CD8-positive, alpha-beta memory T cell (primary cell): ENCODE measurements at regions of chr12 and their contacts with region 1.

Region 1: DNA sequence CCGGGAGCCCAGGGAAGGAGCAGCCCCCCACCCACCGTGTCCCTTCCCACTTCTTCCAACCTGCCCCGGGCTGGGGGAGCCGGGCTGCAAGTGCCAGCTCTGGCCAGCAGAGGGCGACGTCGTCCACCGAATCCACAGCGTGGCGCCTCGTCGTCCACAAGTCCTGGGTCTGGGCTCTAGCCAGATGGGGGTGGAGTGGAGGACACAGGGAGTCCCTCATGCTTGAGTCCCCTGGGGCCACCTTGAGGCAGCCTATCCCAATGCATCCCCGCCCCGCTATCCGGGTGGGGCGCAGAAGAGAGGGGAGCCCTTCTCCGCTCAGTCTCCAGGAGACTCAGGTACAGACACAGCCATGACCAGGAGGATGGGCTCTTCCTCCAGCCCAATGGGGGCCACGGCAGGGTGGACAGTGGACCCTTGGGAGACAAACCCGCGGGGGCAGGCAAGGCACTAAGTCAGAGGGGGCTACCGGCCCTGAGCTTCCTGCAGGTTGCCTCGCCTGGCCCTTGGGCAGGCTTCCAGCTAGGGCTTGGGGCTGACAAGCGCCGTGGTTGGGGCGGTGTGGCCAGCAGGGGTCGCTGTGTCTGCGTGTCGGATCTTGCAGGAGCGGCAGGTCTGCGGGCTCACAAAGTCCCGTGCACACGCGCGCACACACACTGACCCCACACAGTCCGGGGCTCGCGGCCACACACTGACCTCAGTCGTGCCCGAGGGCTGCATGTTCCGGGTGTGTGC is 5.5 kb downstream of the AQP5 start:
- DNase-seq: peak; percentile 84 to 92 (median 88)
- H3K4me3 ChIP-seq: peak overlapping the region; percentile 68
- H3K4me3 Mint-ChIP-seq: peak overlapping the region; percentile 21 to 87 (median 77)
- H3K27ac ChIP-seq: no peak overlapping the region
- H3K27ac Mint-ChIP-seq: no peak overlapping the region
- H3K4me1 ChIP-seq: peaks cover 5% of the 10 kb centered on the region
- H3K4me1 Mint-ChIP-seq: peaks cover 0 to 11% (median 4%) of the 10 kb centered on the region in 3 donors
- H3K27me3 ChIP-seq: peaks cover 25% of the 10 kb centered on the region
- H3K27me3 Mint-ChIP-seq: peaks cover 25 to 40% of the 10 kb centered on the region in 2 donors

Region 2: GRCh38 chr12:49983892-49984291 is 16.7 kb after region 1 on chr12:
- CTCF ChIA-PET with region 1: interaction called, 62 read pairs
- POLR2A ChIA-PET with region 1: no interaction called
- DNase-seq: no peak
- H3K4me3 ChIP-seq: no peak overlapping the region
- H3K4me3 Mint-ChIP-seq: no peak overlapping the region
- H3K27ac ChIP-seq: no peak overlapping the region
- H3K27ac Mint-ChIP-seq: peak overlapping the region in 1 of 8 donors; percentile 13
- H3K4me1 ChIP-seq: no peaks in the 10 kb centered on the region
- H3K4me1 Mint-ChIP-seq: no peaks in the 10 kb centered on the region
- H3K27me3 ChIP-seq: no peaks in the 10 kb centered on the region
- H3K27me3 Mint-ChIP-seq: no peaks in the 10 kb centered on the region

Region 3: DNA sequence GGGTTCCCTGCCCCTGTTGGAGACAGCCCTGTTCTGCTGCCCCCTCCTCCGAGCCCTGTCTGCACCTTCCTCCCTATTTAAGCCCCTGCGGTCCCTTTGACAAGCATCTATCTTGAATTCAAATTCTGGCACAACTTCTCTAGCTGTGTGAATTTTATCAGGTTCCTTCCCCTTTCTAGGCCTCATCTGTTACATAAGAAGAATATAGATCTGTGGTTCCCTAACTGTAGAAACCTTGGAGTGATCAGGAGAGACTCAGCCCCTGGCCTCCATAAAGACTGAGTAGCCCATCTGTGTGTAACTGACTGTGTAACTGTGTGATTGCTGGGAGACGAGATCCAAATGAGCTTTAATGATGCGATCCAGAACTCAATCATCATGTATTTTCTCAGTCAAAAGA is 71.1 kb after region 1 on chr12:
- CTCF ChIA-PET with region 1: interaction called, 10 read pairs
- POLR2A ChIA-PET with region 1: no interaction called
- DNase-seq: no peak
- H3K4me3 ChIP-seq: no peak overlapping the region
- H3K4me3 Mint-ChIP-seq: no peak overlapping the region
- H3K27ac ChIP-seq: no peak overlapping the region
- H3K27ac Mint-ChIP-seq: peak overlapping the region in 1 of 8 donors; percentile 48
- H3K4me1 ChIP-seq: no peaks in the 10 kb centered on the region
- H3K4me1 Mint-ChIP-seq: no peaks in the 10 kb centered on the region
- H3K27me3 ChIP-seq: no peaks in the 10 kb centered on the region
- H3K27me3 Mint-ChIP-seq: peaks cover 7 to 13% of the 10 kb centered on the region in 2 donors

Region 4: GRCh38 chr12:50062728-50063460 is 95.7 kb after region 1 on chr12:
- CTCF ChIA-PET with region 1: interaction called, 59 read pairs
- POLR2A ChIA-PET with region 1: interaction called, 3 read pairs
- DNase-seq: no peak
- H3K4me3 ChIP-seq: no peak overlapping the region
- H3K4me3 Mint-ChIP-seq: no peak overlapping the region
- H3K27ac ChIP-seq: no peak overlapping the region
- H3K27ac Mint-ChIP-seq: no peak overlapping the region
- H3K4me1 ChIP-seq: peaks cover 18% of the 10 kb centered on the region
- H3K4me1 Mint-ChIP-seq: peaks cover 10 to 36% (median 14%) of the 10 kb centered on the region in 3 donors
- H3K27me3 ChIP-seq: no peaks in the 10 kb centered on the region
- H3K27me3 Mint-ChIP-seq: peaks cover 22 to 28% of the 10 kb centered on the region in 2 donors